Naive thymus-derived CD4-positive, alpha-beta T cell (primary cell): ENCODE measurements at regions of chr22 and their contacts with region 1.

Region 1: GRCh38 chr22:37933711-37934376 is 19.6 kb downstream of the C22orf23 start:
- DNase-seq: peak; percentile 50 to 89 (median 71)
- ATAC-seq: peak; percentile 100
- H3K4me3 ChIP-seq: no peak overlapping the region
- H3K4me3 Mint-ChIP-seq: no peak overlapping the region
- H3K27ac ChIP-seq: no peak overlapping the region
- H3K27ac Mint-ChIP-seq: peak overlapping the region in 1 of 9 donors; percentile 7
- H3K4me1 ChIP-seq: peaks cover 0 to 4% of the 10 kb centered on the region in 2 donors
- H3K4me1 Mint-ChIP-seq: peaks cover 0 to 15% (median 8%) of the 10 kb centered on the region in 7 donors
- H3K27me3 ChIP-seq: no peaks in the 10 kb centered on the region
- H3K27me3 Mint-ChIP-seq: no peaks in the 10 kb centered on the region

Region 2: DNA sequence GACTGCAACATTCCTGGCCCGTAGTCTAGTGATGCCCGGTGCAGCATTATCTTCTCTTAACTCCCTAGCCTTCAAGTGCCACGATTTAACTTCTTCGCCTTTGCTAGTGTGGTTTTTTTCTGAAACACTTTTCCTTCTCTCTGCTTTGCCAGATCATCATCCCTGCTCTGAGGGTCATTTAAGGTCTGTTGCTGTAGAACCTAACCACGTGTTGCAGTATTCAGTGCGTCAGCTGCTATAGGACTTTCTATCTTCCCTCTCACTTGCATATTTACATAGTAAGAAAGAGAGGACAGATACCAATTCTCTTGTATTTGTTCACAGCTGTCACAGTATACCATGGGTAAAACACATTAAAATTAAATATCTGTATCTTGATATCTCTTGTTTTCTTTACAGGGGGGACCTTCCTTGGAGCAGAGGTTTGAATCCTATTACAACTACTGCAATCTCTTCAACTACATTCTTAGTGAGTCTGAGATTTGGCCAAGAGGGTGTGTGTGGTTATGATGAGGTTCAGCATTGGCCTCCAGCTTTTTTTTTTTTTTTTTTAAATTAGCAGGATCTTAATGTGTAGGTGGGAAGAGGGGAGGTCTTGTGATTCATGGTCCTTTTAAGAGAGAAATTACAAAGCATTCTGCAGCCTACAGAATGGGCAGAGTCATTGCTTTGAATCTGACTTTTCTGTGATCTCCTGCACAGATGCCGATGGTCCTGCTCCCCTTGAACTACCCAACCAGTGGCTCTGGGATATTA is 71.1 kb before region 1 on chr22:
- CTCF ChIA-PET with region 1: interaction called, 6 read pairs
- POLR2A ChIA-PET with region 1: no interaction called
- intact Hi-C with region 1: loop called in 1 of 2 experiments (anchors 5 kb)
- DNase-seq: no peak
- ATAC-seq: no peak
- H3K4me3 ChIP-seq: no peak overlapping the region
- H3K4me3 Mint-ChIP-seq: no peak overlapping the region
- H3K27ac ChIP-seq: no peak overlapping the region
- H3K27ac Mint-ChIP-seq: peak overlapping the region in 3 of 9 donors; percentile 13 to 82 (median 76)
- H3K4me1 ChIP-seq: peaks cover 0 to 2% of the 10 kb centered on the region in 2 donors
- H3K4me1 Mint-ChIP-seq: peaks cover 5 to 10% (median 6%) of the 10 kb centered on the region in 7 donors
- H3K27me3 ChIP-seq: no peaks in the 10 kb centered on the region
- H3K27me3 Mint-ChIP-seq: no peaks in the 10 kb centered on the region

Region 3: DNA sequence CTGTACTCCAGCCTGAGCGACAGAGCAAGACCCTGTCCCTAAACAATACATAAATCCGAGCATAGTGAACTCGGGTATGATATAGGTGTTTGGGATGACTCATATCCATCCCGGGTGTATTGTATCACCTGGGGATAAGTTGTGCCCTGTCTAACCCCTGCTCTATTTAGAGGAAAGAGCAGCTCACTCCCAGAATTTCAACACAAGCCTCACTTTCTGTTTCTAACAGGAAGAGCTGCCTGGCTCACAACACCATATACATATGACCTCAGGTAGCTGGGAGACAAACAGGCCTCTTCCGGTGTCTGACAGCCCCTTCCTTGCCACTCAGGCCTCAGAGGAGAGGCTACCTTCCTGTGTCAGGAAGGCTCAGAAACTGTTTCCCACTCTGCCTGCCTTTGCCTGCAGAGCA is 37.7 kb before region 1 on chr22:
- CTCF ChIA-PET with region 1: interaction called, 4 read pairs
- POLR2A ChIA-PET with region 1: no interaction called
- intact Hi-C with region 1: loop called in 1 of 2 experiments (anchors 5 kb)
- DNase-seq: peak in 8 of 9 donors; percentile 41 to 60 (median 50)
- ATAC-seq: peak; percentile 91
- H3K4me3 ChIP-seq: peak overlapping the region; percentile 2
- H3K4me3 Mint-ChIP-seq: peak overlapping the region; percentile 40 to 84 (median 73)
- H3K27ac ChIP-seq: peak overlapping the region; percentile 67
- H3K27ac Mint-ChIP-seq: peak overlapping the region; percentile 88 to 98 (median 96)
- H3K4me1 ChIP-seq: peaks cover 13 to 17% of the 10 kb centered on the region in 2 donors
- H3K4me1 Mint-ChIP-seq: peaks cover 16 to 38% (median 26%) of the 10 kb centered on the region in 7 donors
- H3K27me3 ChIP-seq: no peaks in the 10 kb centered on the region
- H3K27me3 Mint-ChIP-seq: no peaks in the 10 kb centered on the region

Region 4: GRCh38 chr22:37953437-37954179 is 19.8 kb after region 1 on chr22 and contains the starts of genes C22orf23 and POLR2F:
- CTCF ChIA-PET with region 1: no interaction called
- POLR2A ChIA-PET with region 1: interaction called, 3 read pairs
- intact Hi-C with region 1: loop called in 1 of 2 experiments (anchors 1 kb)
- DNase-seq: peak; percentile 92 to 96 (median 94)
- ATAC-seq: peak; percentile 97
- H3K4me3 ChIP-seq: peak within 1 kb of the TSS; percentile 96
- H3K4me3 Mint-ChIP-seq: peak within 1 kb of the TSS; percentile 93 to 100 (median 99)
- H3K27ac ChIP-seq: peak within 1 kb of the TSS; percentile 75
- H3K27ac Mint-ChIP-seq: peak within 1 kb of the TSS; percentile 93 to 99 (median 95)
- H3K4me1 ChIP-seq: peaks cover 13 to 18% of the 10 kb centered on the region in 2 donors
- H3K4me1 Mint-ChIP-seq: peaks cover 27 to 54% (median 51%) of the 10 kb centered on the region in 7 donors
- H3K27me3 ChIP-seq: no peaks in the 10 kb centered on the region
- H3K27me3 Mint-ChIP-seq: peaks cover 4 to 20% (median 14%) of the 10 kb centered on the region in 5 donors
- total RNA-seq, gene C22orf23: 0.31 TPM in 1 of 5 experiments, not detected in the others
- total RNA-seq, gene POLR2F: 25.9 to 67.8 (median 43.9) TPM

Region 5: DNA sequence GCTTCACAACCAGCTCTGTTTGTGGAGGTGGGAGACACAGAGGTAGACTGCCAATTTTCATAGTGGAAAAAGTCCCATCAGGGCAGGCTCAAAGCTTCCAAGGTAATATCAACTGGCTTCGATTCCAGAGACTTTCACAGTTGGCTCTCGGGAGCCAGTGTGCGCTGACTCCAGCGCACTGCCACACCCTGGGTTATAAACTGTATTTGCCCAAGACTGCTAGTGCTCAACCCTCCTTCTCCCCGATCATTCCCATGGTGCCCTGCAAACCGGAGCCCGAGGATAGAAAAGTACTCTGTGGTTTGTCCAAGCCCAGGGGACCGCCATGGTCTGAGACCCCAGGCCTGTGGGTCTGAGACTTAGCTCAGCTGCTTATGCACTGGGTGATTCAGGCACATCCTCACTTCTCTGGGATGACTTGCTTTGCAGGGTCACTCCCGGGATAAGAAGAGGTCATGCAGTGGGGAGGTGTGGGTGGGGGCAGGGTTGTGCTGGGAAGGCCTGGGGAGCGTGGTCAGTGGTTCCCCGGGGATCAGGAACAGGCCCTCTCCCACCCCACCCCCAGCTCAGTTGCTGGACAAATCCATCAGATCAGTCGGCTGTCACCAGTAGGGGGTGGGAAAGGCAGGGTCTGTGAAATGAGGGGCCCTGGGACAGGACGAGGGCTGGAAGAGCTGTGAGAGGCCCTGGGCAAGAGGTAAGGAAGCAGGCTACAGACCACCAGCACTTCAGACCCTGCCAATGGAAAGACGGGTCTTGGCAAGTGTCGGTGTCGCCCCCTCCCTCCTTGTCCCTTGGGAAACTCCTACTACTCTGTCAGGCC is 96.7 kb after region 1 on chr22:
- CTCF ChIA-PET with region 1: no interaction called
- POLR2A ChIA-PET with region 1: no interaction called
- intact Hi-C with region 1: no loop called
- DNase-seq: no peak
- ATAC-seq: no peak
- H3K4me3 ChIP-seq: no peak overlapping the region
- H3K4me3 Mint-ChIP-seq: no peak overlapping the region
- H3K27ac ChIP-seq: no peak overlapping the region
- H3K27ac Mint-ChIP-seq: no peak overlapping the region
- H3K4me1 ChIP-seq: no peaks in the 10 kb centered on the region
- H3K4me1 Mint-ChIP-seq: peaks cover 0 to 5% (median 0%) of the 10 kb centered on the region in 7 donors
- H3K27me3 ChIP-seq: no peaks in the 10 kb centered on the region
- H3K27me3 Mint-ChIP-seq: no peaks in the 10 kb centered on the region